Activated T-helper 2 cell treated with anti-CD3 and anti-CD28 coated beads, Interferon-gamma antibody, Interleukin-2, Interleukin-4, amounts not matched to agents 10 μg/mL and 5 μg/mL and 100 μg/mL, durations not matched to agents 14 hours and 24 hours and 36 hours (primary cell): ENCODE measurements at regions of chr17 and their contacts with region 1.

Region 1: GRCh38 chr17:3827124-3827773 is 18.8 kb downstream of the NCBP3 start:
- DNase-seq: peak; percentile 36
- H3K4me3 Mint-ChIP-seq: no peak overlapping the region
- H3K27ac Mint-ChIP-seq: no peak overlapping the region
- H3K4me1 Mint-ChIP-seq: peaks cover 28% of the 10 kb centered on the region
- H3K27me3 Mint-ChIP-seq: no peaks in the 10 kb centered on the region

Region 2: GRCh38 chr17:3683054-3683511 is 144.2 kb before region 1 on chr17:
- intact Hi-C with region 1: loop called (anchors 2 kb)
- DNase-seq: peak; percentile 43
- H3K4me3 Mint-ChIP-seq: no peak overlapping the region
- H3K27ac Mint-ChIP-seq: peak overlapping the region; percentile 49
- H3K4me1 Mint-ChIP-seq: peaks cover 6% of the 10 kb centered on the region
- H3K27me3 Mint-ChIP-seq: no peaks in the 10 kb centered on the region

Region 3: GRCh38 chr17:3723556-3724369 is 103.5 kb before region 1 on chr17 and contains the start of gene HASPIN:
- intact Hi-C with region 1: loop called (anchors 5 kb)
- DNase-seq: peak; percentile 91
- H3K4me3 Mint-ChIP-seq: peak within 1 kb of the TSS; percentile 95
- H3K27ac Mint-ChIP-seq: peak within 1 kb of the TSS; percentile 84
- H3K4me1 Mint-ChIP-seq: peaks cover 51% of the 10 kb centered on the region
- H3K27me3 Mint-ChIP-seq: no peaks in the 10 kb centered on the region
- total RNA-seq, gene HASPIN: 23.0 and 23.4 TPM in 2 replicates

Region 4: DNA sequence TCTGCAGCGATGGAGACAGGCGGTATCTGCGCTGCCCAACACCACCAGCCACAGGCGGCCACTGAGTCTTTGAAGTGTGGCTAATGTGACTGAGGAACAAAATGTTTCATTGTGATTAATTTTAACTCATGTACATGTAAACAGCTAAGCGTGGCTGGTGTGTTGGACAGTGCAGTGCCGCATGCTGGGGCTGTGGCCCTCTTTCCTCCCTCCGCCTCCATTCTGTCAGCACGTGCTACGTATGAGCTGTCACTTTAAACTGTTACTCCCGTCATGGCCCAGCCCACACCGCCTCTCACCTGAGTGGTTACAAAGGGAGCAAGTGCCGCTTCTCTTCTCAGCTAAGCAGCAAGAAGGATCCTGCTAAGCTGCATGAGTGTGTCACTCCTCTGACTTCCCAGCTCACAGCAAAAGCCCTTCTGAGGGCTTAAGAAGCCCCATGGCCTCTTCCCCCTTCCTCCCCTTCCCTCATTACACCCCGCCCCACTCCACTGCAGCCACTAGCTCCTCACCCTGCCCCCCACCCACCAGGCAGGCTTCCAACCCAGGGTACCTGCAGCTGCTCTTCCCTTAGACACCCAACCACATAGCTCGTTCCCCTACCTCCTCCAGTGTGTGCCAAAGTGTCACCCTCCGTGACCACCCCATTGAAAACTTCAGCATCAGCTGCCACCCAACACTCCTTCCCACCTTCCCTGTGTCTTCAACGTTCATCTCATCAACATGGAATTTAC is 88.5 kb before region 1 on chr17:
- intact Hi-C with region 1: loop called (anchors 1 kb)
- DNase-seq: peak; percentile 43
- H3K4me3 Mint-ChIP-seq: no peak overlapping the region
- H3K27ac Mint-ChIP-seq: peak overlapping the region; percentile 28
- H3K4me1 Mint-ChIP-seq: peaks cover 35% of the 10 kb centered on the region
- H3K27me3 Mint-ChIP-seq: peaks cover 3% of the 10 kb centered on the region

Region 5: DNA sequence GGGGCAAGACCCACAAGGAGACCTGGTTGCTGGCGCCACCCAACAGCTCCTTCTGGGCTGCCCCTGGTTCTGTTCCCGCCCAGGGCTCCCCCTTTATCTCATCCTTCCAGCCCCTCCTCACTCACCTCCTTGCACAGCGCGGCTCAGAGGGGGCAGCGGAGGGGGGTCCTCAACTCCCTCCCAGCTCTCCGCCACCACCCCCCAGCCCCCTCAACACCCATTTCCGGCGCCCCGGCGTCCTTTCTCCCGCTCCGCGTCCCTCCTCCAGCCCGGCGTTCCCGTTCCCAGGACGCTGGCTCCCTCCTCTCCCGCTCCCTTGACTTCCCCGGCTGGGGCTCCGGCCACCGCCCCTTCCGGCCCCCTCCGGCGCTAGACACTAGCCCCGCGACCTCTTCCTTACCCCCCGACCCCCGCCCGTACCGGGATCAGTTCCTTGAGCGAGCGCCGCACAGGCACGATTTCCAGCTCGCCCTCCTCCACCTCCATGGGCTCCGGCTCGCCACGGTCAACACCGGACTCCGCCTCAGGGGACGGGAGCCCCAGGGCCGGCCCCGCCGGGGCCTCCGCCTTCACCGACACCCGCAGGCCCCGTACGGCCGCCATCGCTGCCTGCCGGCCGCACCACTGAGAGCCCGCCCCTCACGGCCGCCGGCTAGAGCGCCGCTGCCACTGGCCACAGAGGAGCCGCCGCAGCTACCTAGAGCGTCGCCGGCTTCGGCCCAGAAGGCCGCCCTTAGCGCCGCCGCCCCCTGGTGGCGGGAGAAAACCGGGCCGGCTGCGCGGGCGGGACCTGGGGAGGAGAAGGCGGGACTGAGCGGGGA is 18.6 kb after region 1 on chr17 and contains the start of gene NCBP3:
- intact Hi-C with region 1: no loop called
- DNase-seq: peak; percentile 89
- H3K4me3 Mint-ChIP-seq: peak within 1 kb of the TSS; percentile 96
- H3K27ac Mint-ChIP-seq: peak within 1 kb of the TSS; percentile 95
- H3K4me1 Mint-ChIP-seq: peaks cover 20% of the 10 kb centered on the region
- H3K27me3 Mint-ChIP-seq: peaks cover 9% of the 10 kb centered on the region
- total RNA-seq, gene NCBP3: 49.2 and 57.2 TPM in 2 replicates